Naive thymus-derived CD4-positive, alpha-beta T cell (primary cell): ENCODE measurements at regions of chr6 and their contacts with region 1.

Region 1: DNA sequence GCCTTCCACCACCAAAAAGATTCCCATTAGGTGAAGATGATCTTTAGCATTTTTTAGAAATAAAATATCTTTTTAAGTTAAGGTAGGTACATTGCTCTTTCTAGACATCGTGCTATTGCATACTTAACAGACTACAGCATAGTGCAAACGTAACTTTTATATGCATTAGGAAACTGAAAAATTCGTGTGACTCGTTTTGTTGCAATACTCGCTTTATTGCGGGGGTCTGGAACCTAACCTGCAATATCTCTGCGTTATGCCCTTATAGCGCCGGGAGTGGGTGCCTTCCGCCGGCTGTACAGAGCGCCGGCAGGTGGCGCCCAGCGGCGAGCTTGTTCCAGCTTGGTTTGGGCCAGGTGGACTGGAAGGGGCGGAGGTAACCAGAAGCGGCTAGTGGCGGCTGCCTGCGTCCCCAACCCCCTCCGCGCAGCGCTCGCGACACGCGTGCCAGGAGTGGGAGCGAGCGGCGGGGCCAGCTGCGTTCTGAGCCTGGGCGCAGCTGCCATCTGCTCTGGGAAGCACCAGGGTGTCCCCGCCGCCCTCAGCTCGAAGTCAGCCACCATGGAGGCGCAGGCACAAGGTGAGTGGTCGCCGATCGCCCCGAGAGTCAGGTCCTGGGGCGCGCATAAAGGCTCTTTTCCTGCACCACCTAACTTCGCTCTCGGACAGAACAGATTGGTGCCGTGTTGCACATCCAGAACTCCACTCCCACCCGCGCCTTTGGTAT is at the start of gene TPD52L1:
- DNase-seq: peak; percentile 23 to 68 (median 35)
- ATAC-seq: peak; percentile 87
- H3K4me3 ChIP-seq: peak within 1 kb of the TSS; percentile 55
- H3K4me3 Mint-ChIP-seq: peak within 1 kb of the TSS; percentile 72 to 87 (median 78)
- H3K27ac ChIP-seq: no peak within 1 kb of the TSS
- H3K27ac Mint-ChIP-seq: no peak within 1 kb of the TSS
- H3K4me1 ChIP-seq: peaks cover 0 to 5% of the 10 kb centered on the region in 2 donors
- H3K4me1 Mint-ChIP-seq: peaks cover 0 to 14% (median 10%) of the 10 kb centered on the region in 7 donors
- H3K27me3 ChIP-seq: peaks cover 0 to 4% of the 10 kb centered on the region in 2 donors
- H3K27me3 Mint-ChIP-seq: peaks cover 24 to 54% (median 45%) of the 10 kb centered on the region in 5 donors
- total RNA-seq, gene TPD52L1: 0.15 TPM in 1 of 5 experiments, not detected in the others

Region 2: GRCh38 chr6:125512621-125513020 is 359.1 kb after region 1 on chr6:
- CTCF ChIA-PET with region 1: no interaction called
- POLR2A ChIA-PET with region 1: no interaction called
- intact Hi-C with region 1: no loop called
- DNase-seq: peak in 1 of 9 donors; percentile 9
- ATAC-seq: no peak
- H3K4me3 ChIP-seq: no peak overlapping the region
- H3K4me3 Mint-ChIP-seq: no peak overlapping the region
- H3K27ac ChIP-seq: no peak overlapping the region
- H3K27ac Mint-ChIP-seq: no peak overlapping the region
- H3K4me1 ChIP-seq: no peaks in the 10 kb centered on the region
- H3K4me1 Mint-ChIP-seq: no peaks in the 10 kb centered on the region
- H3K27me3 ChIP-seq: no peaks in the 10 kb centered on the region
- H3K27me3 Mint-ChIP-seq: peaks cover 10 to 37% (median 19%) of the 10 kb centered on the region in 5 donors

Region 3: GRCh38 chr6:125986300-125987025 is 832.9 kb after region 1 on chr6 and contains the start of gene TRMT11:
- CTCF ChIA-PET with region 1: no interaction called
- POLR2A ChIA-PET with region 1: no interaction called
- intact Hi-C with region 1: loop called in 1 of 2 experiments (anchors 10 kb)
- DNase-seq: peak; percentile 58 to 80 (median 77)
- ATAC-seq: peak; percentile 95
- H3K4me3 ChIP-seq: peak within 1 kb of the TSS; percentile 89
- H3K4me3 Mint-ChIP-seq: peak within 1 kb of the TSS in 4 of 10 donors; percentile 12 to 40 (median 24)
- H3K27ac ChIP-seq: peak within 1 kb of the TSS; percentile 76
- H3K27ac Mint-ChIP-seq: no peak within 1 kb of the TSS
- H3K4me1 ChIP-seq: peaks cover 14 to 21% of the 10 kb centered on the region in 2 donors
- H3K4me1 Mint-ChIP-seq: peaks cover 0 to 19% (median 2%) of the 10 kb centered on the region in 7 donors
- H3K27me3 ChIP-seq: no peaks in the 10 kb centered on the region
- H3K27me3 Mint-ChIP-seq: no peaks in the 10 kb centered on the region
- total RNA-seq, gene TRMT11: 13.6 to 34.1 (median 20.1) TPM

Region 4: GRCh38 chr6:126446248-126446647 is 1292.7 kb after region 1 on chr6:
- CTCF ChIA-PET with region 1: no interaction called
- POLR2A ChIA-PET with region 1: no interaction called
- intact Hi-C with region 1: loop called in 1 of 2 experiments (anchors 5 kb)
- DNase-seq: no peak
- ATAC-seq: no peak
- H3K4me3 ChIP-seq: no peak overlapping the region
- H3K4me3 Mint-ChIP-seq: no peak overlapping the region
- H3K27ac ChIP-seq: no peak overlapping the region
- H3K27ac Mint-ChIP-seq: no peak overlapping the region
- H3K4me1 ChIP-seq: no peaks in the 10 kb centered on the region
- H3K4me1 Mint-ChIP-seq: no peaks in the 10 kb centered on the region
- H3K27me3 ChIP-seq: no peaks in the 10 kb centered on the region
- H3K27me3 Mint-ChIP-seq: no peaks in the 10 kb centered on the region

Region 5: DNA sequence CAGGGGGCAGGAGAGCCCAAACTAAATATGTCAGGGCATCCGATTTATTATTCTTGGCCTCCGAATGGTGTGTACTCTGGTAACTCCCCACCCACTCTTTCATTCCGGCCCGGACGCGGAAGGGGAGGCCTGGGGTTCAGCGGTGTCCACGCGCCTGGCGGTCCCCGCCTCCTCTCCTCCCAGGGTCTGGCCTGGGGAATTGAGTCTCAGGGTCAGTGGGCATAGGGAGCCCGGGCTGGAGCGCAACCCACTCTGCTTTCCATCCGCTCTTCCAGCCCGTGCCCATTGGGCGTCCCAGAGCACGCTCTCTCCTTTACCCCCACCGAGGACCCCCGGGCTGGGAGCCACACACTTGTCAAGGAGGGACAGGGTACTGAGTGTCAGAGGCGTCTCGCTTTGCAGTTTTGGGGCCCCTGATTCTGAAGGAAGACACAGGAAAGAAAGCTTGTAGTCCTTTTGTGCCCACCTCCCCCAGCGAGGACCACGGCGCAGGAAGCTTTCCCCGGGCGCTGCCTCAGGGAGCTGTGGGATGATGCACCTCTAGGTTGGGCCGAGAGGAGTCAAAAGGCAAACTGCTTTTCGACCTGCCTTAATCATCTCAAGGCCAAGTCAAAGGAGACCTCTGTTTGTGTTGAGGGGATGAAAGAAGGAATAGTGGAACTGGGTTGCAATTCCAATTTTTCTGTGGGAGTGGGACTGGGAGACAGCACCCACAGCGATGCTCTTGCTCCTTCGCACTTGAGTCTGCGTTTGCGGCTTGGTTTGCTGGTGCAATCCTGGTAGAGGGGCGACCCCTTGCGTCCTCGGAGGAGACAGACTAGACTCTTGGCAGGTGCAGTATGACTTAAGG is 1967.5 kb after region 1 on chr6:
- CTCF ChIA-PET with region 1: no interaction called
- POLR2A ChIA-PET with region 1: no interaction called
- intact Hi-C with region 1: loop called in 1 of 2 experiments (anchors 2 kb)
- DNase-seq: peak in 7 of 9 donors; percentile 13 to 72 (median 38)
- ATAC-seq: peak; percentile 80
- H3K4me3 ChIP-seq: no peak overlapping the region
- H3K4me3 Mint-ChIP-seq: peak overlapping the region; percentile 7 to 86 (median 54)
- H3K27ac ChIP-seq: no peak overlapping the region
- H3K27ac Mint-ChIP-seq: no peak overlapping the region
- H3K4me1 ChIP-seq: no peaks in the 10 kb centered on the region
- H3K4me1 Mint-ChIP-seq: peaks cover 16 to 32% (median 20%) of the 10 kb centered on the region in 7 donors
- H3K27me3 ChIP-seq: peaks cover 4 to 15% of the 10 kb centered on the region in 2 donors
- H3K27me3 Mint-ChIP-seq: peaks cover 63 to 76% (median 69%) of the 10 kb centered on the region in 5 donors